Caco-2 (cell line): ENCODE measurements at regions of chr15 and their contacts with region 1.

Region 1: DNA sequence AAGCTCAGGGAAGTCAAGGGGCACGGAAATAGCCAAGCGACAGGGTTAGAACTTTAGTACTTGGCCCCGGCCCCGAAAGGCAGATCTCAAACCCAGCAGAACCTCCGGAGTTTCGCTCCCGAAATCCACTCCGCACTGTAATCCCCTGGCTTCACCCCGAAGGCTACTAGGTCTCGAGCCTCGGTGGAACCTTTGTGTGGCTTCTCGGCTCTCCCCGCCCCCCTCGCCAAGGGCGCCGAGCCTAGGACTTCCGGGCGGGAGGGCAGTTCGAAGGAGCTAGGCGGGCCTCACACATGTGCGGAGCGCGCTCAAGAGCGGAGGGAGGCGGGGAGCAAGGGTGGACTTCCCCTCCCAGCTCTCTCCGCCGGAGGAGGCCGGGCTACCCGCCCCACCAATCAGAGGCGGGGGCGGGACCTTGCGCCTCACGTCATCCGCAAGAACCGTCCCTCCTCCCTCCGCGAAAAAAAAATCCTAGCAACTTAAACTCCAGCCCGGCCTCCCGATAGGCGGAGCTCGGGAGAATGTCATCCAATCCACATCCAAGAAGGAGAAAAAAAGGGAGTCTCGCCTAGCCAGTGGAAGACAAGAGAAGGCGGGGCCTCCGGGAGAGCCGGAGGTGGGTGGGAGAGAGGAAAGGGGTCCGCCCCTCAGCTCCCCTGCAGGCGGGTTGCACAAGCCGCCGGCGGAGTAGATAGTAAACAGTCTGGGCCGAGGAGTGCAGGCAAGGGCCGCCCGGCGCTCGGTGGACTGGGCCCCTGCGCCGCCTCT is 2.4 kb upstream of the SIN3A start:
- DNase-seq: peak; percentile 98 to 99
- H3K4me3 ChIP-seq: peak overlapping the region; percentile 78
- H3K4me3 Mint-ChIP-seq: peak overlapping the region; percentile 74
- H3K27ac Mint-ChIP-seq: peak overlapping the region; percentile 89
- H3K4me1 ChIP-seq: peaks cover 23% of the 10 kb centered on the region; the same call in 1 of the 2 replicates
- H3K4me1 Mint-ChIP-seq: peaks cover 14% of the 10 kb centered on the region
- H3K27me3 ChIP-seq: no peaks in the 10 kb centered on the region
- H3K27me3 Mint-ChIP-seq: no peaks in the 10 kb centered on the region
- CTCF ChIP-seq: no peak

Region 2: DNA sequence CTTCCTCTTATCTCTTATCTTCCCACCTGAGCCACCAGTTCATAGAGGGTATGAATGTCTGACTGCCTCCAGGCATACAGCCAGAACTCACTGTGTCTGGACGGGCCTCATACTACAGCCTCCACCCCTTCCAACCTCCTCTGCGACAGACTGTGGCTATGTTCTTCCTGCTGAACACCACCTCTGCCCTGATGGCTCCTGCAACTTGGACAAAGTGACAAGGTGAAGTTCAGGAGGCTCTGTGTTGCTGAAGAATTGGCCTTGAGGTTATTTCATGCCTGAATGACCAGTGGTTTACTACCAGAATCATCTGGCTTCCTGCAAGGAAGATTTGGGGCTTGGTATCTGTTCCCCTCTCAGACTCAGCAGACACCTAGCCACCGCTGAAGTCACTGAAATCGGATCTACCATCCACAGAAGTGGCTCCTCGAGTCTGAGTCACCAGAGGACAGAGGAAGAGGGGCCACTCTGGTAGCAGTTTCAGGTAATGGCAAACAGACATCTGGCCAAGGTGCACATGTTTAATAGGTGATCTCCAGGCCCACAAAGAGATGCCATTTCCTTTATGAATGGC is 596.7 kb before region 1 on chr15:
- CTCF ChIA-PET with region 1: no interaction called
- POLR2A ChIA-PET with region 1: interaction called, 11 read pairs
- intact Hi-C with region 1: no loop called
- DNase-seq: no peak
- H3K4me3 ChIP-seq: no peak overlapping the region
- H3K4me3 Mint-ChIP-seq: no peak overlapping the region
- H3K27ac Mint-ChIP-seq: no peak overlapping the region
- H3K4me1 ChIP-seq: peaks cover 10% of the 10 kb centered on the region
- H3K4me1 Mint-ChIP-seq: peaks cover 15% of the 10 kb centered on the region
- H3K27me3 ChIP-seq: no peaks in the 10 kb centered on the region
- H3K27me3 Mint-ChIP-seq: no peaks in the 10 kb centered on the region
- CTCF ChIP-seq: no peak

Region 3: GRCh38 chr15:75347222-75347878 is 106.5 kb before region 1 on chr15:
- CTCF ChIA-PET with region 1: no interaction called
- POLR2A ChIA-PET with region 1: no interaction called
- intact Hi-C with region 1: no loop called
- DNase-seq: peak; percentile 65 to 76
- H3K4me3 ChIP-seq: peak overlapping the region; percentile 71
- H3K4me3 Mint-ChIP-seq: peak overlapping the region; percentile 93
- H3K27ac Mint-ChIP-seq: peak overlapping the region; percentile 57
- H3K4me1 ChIP-seq: peaks cover 5% of the 10 kb centered on the region; the same call in 1 of the 2 replicates
- H3K4me1 Mint-ChIP-seq: no peaks in the 10 kb centered on the region
- H3K27me3 ChIP-seq: no peaks in the 10 kb centered on the region
- H3K27me3 Mint-ChIP-seq: peaks cover 4% of the 10 kb centered on the region
- CTCF ChIP-seq: no peak

Region 4: GRCh38 chr15:75532413-75533147 is 78.7 kb after region 1 on chr15:
- CTCF ChIA-PET with region 1: interaction called, 9 read pairs
- POLR2A ChIA-PET with region 1: interaction called, 3 read pairs
- intact Hi-C with region 1: loop called (anchors 5 kb)
- DNase-seq: peak; percentile 58 to 67
- H3K4me3 ChIP-seq: no peak overlapping the region
- H3K4me3 Mint-ChIP-seq: no peak overlapping the region
- H3K27ac Mint-ChIP-seq: no peak overlapping the region
- H3K4me1 ChIP-seq: peaks cover 23% of the 10 kb centered on the region
- H3K4me1 Mint-ChIP-seq: peaks cover 17% of the 10 kb centered on the region
- H3K27me3 ChIP-seq: no peaks in the 10 kb centered on the region
- H3K27me3 Mint-ChIP-seq: no peaks in the 10 kb centered on the region
- CTCF ChIP-seq: peak; percentile 48 to 68

Region 5: DNA sequence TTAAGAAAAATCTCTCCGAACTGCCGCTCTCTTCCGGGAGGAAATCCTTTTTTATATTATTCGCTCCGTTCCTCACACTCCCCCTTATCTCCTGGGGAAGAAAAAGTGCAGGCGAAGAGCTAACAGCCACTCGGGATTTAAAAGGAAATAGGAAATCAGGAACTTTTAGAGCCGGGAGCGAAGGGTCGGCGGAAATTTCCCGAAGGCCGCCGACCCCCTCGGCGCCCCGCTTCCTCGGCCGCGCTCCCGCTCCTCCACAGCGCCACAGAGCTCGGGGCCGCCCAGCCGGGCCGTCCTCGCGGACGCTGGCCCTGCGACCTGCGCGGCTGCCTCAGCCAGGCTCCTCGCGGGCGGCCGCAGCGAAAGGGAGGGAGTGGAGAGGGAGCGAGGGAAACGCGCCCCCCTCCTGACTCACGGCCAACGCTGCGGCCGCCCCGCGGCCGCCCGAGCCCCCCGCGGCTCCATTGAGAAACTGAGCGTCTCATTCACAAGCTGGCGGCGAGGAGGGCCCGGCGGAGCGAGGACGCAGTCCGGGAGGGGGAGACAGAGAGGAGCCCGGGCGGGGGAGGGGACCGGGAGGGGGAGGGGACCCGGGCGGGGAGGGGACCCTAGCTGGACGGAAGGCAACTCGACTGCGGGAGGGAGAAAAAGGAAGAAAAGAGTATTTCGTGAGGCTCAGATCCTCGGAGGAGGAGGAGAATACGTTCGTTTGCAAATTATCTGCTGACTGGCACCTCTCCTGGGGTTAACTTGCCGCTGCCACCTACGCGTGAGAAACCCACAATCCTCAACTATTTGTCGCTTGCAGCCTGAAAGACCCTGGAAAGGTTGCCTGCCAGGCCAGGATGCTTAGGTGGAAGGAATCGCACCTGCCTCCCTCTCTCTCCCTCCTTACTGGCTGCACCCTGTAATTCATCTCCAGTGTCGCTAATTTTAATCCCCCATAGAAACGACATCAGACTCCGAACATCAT is 125.3 kb after region 1 on chr15 and contains the start of gene PTPN9:
- CTCF ChIA-PET with region 1: interaction called, 13 read pairs
- POLR2A ChIA-PET with region 1: interaction called, 5 read pairs
- intact Hi-C with region 1: no loop called
- DNase-seq: peak; percentile 77 to 82
- H3K4me3 ChIP-seq: peak within 1 kb of the TSS; percentile 70
- H3K4me3 Mint-ChIP-seq: peak within 1 kb of the TSS; percentile 87
- H3K27ac Mint-ChIP-seq: peak within 1 kb of the TSS; percentile 93
- H3K4me1 ChIP-seq: peaks cover 11% of the 10 kb centered on the region
- H3K4me1 Mint-ChIP-seq: peaks cover 5% of the 10 kb centered on the region
- H3K27me3 ChIP-seq: no peaks in the 10 kb centered on the region
- H3K27me3 Mint-ChIP-seq: no peaks in the 10 kb centered on the region
- CTCF ChIP-seq: peak; percentile 32 to 72
- total RNA-seq, gene PTPN9: 25.4 and 27.7 TPM in 2 replicates

Region 6: DNA sequence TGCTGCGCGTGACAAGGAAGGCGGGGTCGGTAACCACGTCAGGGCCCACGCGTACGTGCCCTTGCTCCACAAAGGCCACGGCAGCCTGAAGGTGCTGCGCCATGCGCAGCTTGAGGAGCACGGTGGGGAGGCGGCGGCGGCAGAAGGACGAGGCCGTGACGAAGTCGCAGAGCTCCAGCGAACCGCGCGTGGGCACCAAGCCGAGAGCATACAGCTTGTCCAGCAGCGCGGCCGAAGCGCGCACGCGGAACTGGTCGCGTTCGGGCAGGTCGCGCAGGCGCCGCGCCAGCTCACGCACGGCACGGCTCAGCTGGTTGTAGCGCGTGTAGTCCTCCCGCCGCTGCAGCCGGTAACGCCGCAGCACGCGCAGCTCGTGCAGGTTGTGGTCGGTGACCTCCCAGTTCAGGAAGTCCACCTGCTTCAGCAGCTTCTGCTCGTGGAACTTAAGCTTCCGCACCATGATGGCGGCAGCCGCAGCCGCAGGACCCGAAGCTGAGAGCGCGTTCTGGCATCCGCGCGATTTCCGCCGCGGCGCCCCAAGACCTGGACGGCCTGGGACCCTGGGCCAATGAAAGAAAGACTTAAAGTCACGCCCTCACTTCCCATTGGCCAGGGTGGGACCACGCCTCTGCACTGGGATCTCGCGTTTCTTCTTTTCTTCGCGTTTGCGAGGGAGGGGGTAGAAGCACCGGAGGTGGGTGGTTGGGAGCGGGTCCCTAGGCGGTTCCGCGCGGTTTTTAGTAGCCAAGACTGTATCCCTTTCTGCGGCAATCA is 186.0 kb after region 1 on chr15 and contains the start of gene IMP3:
- CTCF ChIA-PET with region 1: interaction called, 5 read pairs
- POLR2A ChIA-PET with region 1: interaction called, 25 read pairs
- intact Hi-C with region 1: loop called (anchors 2 kb)
- DNase-seq: peak; percentile 95
- H3K4me3 ChIP-seq: peak within 1 kb of the TSS; percentile 66
- H3K4me3 Mint-ChIP-seq: peak within 1 kb of the TSS; percentile 87
- H3K27ac Mint-ChIP-seq: peak within 1 kb of the TSS; percentile 92
- H3K4me1 ChIP-seq: peaks cover 4% of the 10 kb centered on the region; the same call in 1 of the 2 replicates
- H3K4me1 Mint-ChIP-seq: no peaks in the 10 kb centered on the region
- H3K27me3 ChIP-seq: no peaks in the 10 kb centered on the region
- H3K27me3 Mint-ChIP-seq: no peaks in the 10 kb centered on the region
- CTCF ChIP-seq: no peak
- total RNA-seq, gene IMP3: 58.4 and 60.4 TPM in 2 replicates

Region 7: GRCh38 chr15:75653347-75653913 is 199.5 kb after region 1 on chr15:
- CTCF ChIA-PET with region 1: no interaction called
- POLR2A ChIA-PET with region 1: no interaction called
- intact Hi-C with region 1: no loop called
- DNase-seq: no peak
- H3K4me3 ChIP-seq: no peak overlapping the region
- H3K4me3 Mint-ChIP-seq: no peak overlapping the region
- H3K27ac Mint-ChIP-seq: no peak overlapping the region
- H3K4me1 ChIP-seq: peaks cover 46% of the 10 kb centered on the region
- H3K4me1 Mint-ChIP-seq: peaks cover 40% of the 10 kb centered on the region
- H3K27me3 ChIP-seq: no peaks in the 10 kb centered on the region
- H3K27me3 Mint-ChIP-seq: no peaks in the 10 kb centered on the region
- CTCF ChIP-seq: no peak